Left cardiac atrium (tissue), 4 donors: ENCODE measurements at regions of chr10 and their contacts with region 1.

Region 1: GRCh38 chr10:125160856-125161706 is 718 bp upstream of the CTBP2 start:
- DNase-seq: peak; percentile 84
- ATAC-seq: peak; percentile 76 to 83

Region 2: GRCh38 chr10:125084191-125084613 is 76.9 kb before region 1 on chr10:
- intact Hi-C with region 1: loop called in 1 of 2 experiments (anchors 10 kb)
- DNase-seq: peak; percentile 71
- ATAC-seq: peak; percentile 36 to 88

Region 3: DNA sequence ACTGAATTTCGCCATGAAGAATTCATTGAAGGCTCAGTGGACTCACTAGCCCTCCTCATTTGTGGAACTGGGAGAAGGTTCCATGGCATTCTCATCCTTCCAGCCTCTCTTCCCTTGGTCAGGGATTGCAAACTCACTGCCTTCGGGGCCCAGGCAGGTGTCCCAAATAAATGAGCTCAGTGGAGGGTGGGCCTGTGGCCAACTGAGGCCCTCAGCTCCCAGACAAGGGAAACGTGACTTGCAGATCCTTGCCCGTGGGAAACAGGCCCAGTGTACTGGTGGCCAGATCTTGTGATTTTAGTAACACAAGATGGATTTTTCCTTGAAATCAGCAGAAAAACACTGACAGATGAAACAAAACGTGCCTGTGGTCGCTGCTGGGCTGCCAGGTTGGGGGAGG is 168.0 kb after region 1 on chr10:
- intact Hi-C with region 1: loop called in 1 of 2 experiments (anchors 10 kb)
- DNase-seq: no peak
- ATAC-seq: no peak

Region 4: GRCh38 chr10:125343118-125343925 is 182.2 kb after region 1 on chr10:
- intact Hi-C with region 1: loop called in 1 of 2 experiments (anchors 10 kb)
- DNase-seq: no peak
- ATAC-seq: no peak

Region 5: GRCh38 chr10:125375210-125375609 is 214.1 kb after region 1 on chr10:
- intact Hi-C with region 1: loop called in 1 of 2 experiments (anchors 10 kb)
- DNase-seq: no peak
- ATAC-seq: peak in 1 of 2 donors; percentile 61